Right ventricle myocardium inferior (tissue), 1 donor: ENCODE measurements at regions of chr4 and their contacts with region 1.

Region 1: GRCh38 chr4:121950212-121950679 is 1.6 kb downstream of the TRPC3 start:
- DNase-seq: peak; percentile 87
- ATAC-seq: peak; percentile 93

Region 2: DNA sequence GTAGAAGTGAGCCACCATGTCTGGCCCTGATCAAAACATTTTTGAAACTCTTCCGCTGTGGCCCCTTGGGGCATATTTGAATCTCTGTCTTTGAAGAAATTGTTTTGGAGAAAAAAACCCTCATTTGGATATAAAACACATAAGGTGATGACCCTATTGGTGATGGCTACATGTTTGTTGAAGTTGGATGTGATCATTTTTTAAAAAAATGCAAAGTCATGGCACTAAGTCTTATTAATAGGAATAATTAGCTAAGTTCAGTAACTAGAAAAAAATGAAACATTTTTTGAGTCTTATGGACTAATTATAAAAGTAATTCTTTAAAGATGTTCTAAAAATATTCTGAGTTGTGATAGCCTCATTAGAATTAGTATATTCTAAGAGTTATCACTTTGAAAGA is 62.1 kb before region 1 on chr4:
- intact Hi-C with region 1: no loop called
- DNase-seq: no peak
- ATAC-seq: no peak

Region 3: DNA sequence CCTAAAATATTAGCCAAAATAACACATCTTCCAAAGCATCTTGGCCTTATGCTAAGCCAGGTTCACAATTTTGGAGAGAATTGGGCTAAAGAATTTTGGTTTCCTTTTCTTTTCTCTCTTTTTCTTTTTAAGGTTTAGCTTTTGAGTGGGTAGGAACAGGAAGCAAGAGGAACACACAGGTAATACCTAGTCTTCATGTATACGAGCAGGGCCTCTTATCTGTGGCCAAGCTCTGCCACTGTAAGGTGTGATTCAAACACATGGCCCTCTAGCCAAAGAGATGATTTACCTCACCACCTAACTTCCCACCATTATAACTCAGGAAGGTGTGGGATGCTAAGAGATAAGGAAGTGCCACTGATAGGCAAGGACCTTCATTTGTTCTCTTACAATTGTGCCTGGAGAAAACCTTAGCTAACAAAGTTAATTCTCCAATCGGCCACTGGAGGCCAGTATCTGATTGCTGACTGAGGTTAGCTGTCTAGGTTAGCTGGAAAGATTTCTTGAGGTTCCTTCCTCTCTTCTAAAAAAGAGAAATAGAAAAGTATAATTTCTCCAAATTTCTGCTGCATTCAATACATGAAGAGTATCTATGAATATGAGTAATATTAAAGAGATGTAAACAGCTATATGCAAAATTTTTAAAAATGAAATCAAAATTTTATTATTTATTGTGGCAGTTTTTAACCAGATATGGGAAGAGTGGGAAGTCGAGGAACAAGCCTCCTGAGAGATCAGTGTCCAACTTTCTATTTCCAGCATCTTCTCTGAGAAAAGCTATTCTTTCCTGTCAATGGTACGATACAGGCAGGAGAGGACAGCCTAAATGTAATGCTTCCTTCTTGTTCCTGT is 49.9 kb before region 1 on chr4:
- intact Hi-C with region 1: no loop called
- DNase-seq: no peak
- ATAC-seq: peak; percentile 34

Region 4: GRCh38 chr4:122005064-122005755 is 55.0 kb after region 1 on chr4:
- intact Hi-C with region 1: loop called (anchors 2 kb)
- DNase-seq: no peak
- ATAC-seq: peak; percentile 13

Region 5: DNA sequence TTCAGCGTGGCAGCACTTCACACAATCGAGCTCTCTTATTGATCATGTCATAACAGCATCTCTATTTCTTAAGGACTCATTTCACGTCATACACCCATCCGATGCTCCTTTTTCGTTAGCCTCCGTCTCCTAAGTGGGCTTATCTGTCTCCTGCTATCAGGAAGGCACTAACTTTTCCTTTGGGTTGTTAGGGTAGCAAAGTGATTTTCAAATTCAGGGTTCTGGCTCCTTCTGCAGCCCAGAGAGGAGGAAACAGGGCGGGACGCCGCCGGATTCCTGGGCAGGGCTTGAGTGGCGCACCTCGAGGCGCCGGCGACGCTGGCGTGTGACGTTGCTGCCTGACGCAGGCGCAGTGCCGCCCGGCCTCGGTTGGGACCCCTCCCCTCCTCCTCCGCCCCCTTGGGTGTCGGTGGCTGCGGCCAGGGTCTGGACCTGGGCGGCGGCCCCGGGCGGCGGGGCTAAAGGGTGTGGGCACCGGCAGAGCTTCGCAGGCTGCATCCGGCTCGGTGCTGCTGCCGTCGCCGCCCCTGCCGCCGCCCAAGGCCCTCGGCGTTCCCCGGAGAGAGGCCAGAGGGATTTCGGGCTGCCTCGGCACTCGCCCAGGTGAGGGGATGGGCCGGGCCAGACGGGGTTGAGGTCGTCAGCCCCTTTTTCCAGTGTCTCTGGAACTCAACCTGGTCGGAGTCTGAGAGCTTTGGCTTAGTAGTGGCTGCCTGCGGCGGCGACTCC is 201.9 kb after region 1 on chr4 and contains the start of gene BLTP1:
- intact Hi-C with region 1: loop called (anchors 5 kb)
- DNase-seq: peak; percentile 96
- ATAC-seq: peak; percentile 100
- total RNA-seq, gene BLTP1: 28.9 TPM

Region 6: DNA sequence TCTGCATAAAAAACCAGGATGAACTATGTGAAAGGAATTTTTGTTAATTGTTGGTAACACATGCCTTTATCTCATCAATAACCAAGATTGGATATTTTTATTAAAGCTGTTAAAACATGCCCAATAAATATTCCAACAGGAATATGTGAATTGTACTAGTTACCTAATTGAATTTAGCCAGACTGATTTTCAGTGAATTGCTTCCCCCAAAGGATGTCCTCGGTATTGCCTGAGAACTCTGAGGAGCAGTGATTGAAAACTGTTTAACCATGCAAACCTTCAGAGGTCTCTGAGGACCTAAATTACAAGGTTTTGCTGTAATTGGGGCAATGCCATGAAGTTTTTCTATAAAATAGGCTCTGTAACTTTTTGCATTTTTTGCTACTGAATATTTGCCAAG is 268.5 kb after region 1 on chr4:
- intact Hi-C with region 1: loop called (anchors 10 kb)
- DNase-seq: no peak
- ATAC-seq: no peak

Region 7: DNA sequence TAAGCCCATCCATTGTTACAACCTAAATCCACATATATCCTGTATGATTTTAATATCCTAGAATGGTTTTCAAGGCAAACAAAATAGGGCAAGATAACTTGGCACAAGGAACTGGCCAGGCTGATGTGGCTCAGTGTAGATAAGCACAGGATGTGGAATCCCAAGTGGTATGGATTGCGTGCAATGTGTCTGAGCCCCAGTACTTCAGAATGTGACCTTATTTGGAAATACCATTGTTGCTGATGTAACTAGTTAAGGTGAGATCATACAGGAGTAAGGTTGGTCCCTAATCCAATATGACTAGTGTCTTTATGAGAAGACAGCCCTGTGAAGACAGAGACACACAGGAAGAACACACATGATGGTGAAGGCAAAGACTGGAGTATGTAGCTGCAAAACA is 598.2 kb after region 1 on chr4:
- intact Hi-C with region 1: no loop called
- DNase-seq: no peak
- ATAC-seq: no peak